CD8-positive, alpha-beta T cell (primary cell): ENCODE measurements at regions of chr16 and their contacts with region 1.

Region 1: DNA sequence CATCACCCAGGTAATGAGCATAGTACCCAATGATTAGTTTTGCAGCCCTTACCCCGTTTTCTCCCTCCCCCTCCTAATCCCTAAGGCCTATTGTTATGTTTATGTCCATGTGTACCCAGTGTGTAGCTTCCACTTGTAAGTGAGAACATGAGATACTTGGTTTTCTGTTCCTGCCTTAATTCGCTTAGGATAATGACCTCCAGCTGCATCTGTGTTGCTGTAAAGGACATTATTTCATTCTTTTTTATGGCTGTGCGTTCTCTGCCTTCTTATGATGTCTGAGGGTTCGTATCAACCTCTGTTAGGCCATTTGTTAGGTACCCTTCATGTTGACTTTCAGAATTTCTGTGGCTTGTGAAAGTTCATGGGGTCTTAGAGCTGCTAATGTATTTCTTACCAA is 31.0 kb downstream of the CTCF start:
- DNase-seq: no peak
- ATAC-seq: no peak
- H3K4me3 ChIP-seq: no peak overlapping the region
- H3K4me3 Mint-ChIP-seq: no peak overlapping the region
- H3K27ac ChIP-seq: no peak overlapping the region
- H3K27ac Mint-ChIP-seq: peak overlapping the region; percentile 22
- H3K4me1 ChIP-seq: peaks cover 10% of the 10 kb centered on the region
- H3K4me1 Mint-ChIP-seq: peaks cover 46% of the 10 kb centered on the region
- H3K27me3 ChIP-seq: no peaks in the 10 kb centered on the region
- H3K27me3 Mint-ChIP-seq: no peaks in the 10 kb centered on the region
- CTCF ChIP-seq: no peak

Region 2: DNA sequence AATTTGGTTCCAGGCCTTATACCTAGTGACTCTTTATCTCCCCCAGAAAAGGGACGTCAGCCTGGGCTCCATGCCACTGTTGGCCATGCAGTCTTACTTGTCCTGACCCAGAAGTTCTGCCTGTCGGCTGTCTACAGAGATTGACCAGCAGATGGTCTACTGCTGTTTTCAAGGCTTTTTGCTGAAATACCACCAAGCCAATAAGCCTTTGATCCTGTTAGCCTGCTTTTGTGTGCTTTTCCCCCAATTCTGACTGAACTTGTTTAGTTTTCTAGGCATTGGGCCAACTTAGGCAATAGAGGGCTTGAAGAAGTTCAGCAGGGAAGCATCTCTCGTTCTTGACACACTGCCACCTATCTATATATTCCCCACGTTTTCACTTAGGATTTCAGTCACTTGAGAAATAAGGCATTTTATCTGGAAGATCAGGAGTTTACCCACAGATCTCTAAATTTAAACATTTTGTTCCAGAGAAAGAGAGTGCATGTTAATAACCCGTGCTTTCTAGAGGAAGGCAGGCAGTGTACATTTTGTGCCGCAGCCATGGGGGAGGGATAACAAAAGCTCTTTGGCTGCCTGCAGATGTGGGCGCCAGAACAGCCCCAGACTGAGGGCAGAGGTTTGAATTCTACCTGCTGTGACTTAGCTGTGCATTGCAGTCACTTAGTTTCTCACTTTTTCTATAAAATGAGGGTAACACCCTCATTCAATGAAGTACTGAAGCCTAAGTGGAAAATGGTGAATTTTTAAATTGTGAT is 39.3 kb after region 1 on chr16:
- CTCF ChIA-PET with region 1: interaction called, 3 read pairs
- POLR2A ChIA-PET with region 1: no interaction called
- intact Hi-C with region 1: loop called in 1 of 2 experiments (anchors 5 kb)
- DNase-seq: no peak
- ATAC-seq: no peak
- H3K4me3 ChIP-seq: no peak overlapping the region
- H3K4me3 Mint-ChIP-seq: no peak overlapping the region
- H3K27ac ChIP-seq: no peak overlapping the region
- H3K27ac Mint-ChIP-seq: no peak overlapping the region
- H3K4me1 ChIP-seq: no peaks in the 10 kb centered on the region
- H3K4me1 Mint-ChIP-seq: no peaks in the 10 kb centered on the region
- H3K27me3 ChIP-seq: no peaks in the 10 kb centered on the region
- H3K27me3 Mint-ChIP-seq: no peaks in the 10 kb centered on the region
- CTCF ChIP-seq: no peak

Region 3: DNA sequence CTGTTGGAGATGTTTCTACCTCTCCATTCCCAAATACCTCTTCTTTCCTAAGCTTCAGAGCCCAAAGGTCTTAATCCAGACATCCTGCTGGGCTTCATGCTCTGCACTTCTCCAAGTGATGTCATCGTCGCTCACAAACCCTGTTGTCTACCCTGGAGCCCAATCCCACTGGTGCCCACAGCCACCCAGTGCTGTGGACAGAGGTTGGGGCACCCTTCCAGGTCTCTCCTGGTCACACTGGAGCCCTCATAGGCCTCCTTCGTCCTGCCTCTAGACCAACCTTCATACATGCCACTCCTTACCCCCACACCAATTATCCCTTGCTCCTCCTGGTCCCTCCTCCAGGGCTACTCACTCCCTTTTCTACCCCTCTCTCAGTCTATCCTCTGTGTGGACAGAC is 57.2 kb after region 1 on chr16:
- CTCF ChIA-PET with region 1: no interaction called
- POLR2A ChIA-PET with region 1: no interaction called
- intact Hi-C with region 1: no loop called
- DNase-seq: no peak
- ATAC-seq: no peak
- H3K4me3 ChIP-seq: no peak overlapping the region
- H3K4me3 Mint-ChIP-seq: no peak overlapping the region
- H3K27ac ChIP-seq: no peak overlapping the region
- H3K27ac Mint-ChIP-seq: peak overlapping the region; percentile 62
- H3K4me1 ChIP-seq: peaks cover 18% of the 10 kb centered on the region
- H3K4me1 Mint-ChIP-seq: peaks cover 16% of the 10 kb centered on the region
- H3K27me3 ChIP-seq: no peaks in the 10 kb centered on the region
- H3K27me3 Mint-ChIP-seq: no peaks in the 10 kb centered on the region
- CTCF ChIP-seq: no peak